Vagina (tissue), 2 donors: ENCODE measurements at regions of chr5 and their contacts with region 1.

Region 1: DNA sequence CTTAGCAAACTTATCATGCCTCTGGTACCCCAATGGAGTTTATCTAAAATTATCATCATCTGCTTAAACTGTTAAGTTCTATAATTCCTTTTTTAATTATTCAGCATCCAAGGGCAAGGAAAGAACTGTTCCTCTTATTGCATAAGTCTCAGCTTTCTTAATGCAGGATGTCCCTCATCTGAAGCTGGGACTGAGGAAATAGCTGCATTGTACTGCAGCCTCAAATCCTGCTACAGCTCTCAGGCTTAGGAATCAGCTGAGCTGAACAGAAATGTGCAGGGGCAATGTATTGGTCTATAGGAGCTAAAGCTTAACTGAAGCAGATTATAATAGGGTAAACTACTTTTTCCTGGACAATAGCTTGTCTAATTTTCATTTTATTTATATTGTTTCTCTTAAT is 48.0 kb downstream of the HAPLN1 start:
- DNase-seq: no peak
- H3K4me3 ChIP-seq: no peak overlapping the region
- H3K27ac ChIP-seq: no peak overlapping the region
- H3K4me1 ChIP-seq: no peaks in the 10 kb centered on the region
- H3K27me3 ChIP-seq: no peaks in the 10 kb centered on the region
- CTCF ChIP-seq: no peak
- POLR2A ChIP-seq: no peak

Region 2: GRCh38 chr5:84017523-84018230 is 345.0 kb after region 1 on chr5:
- intact Hi-C with region 1: loop called (anchors 10 kb)
- DNase-seq: no peak
- H3K4me3 ChIP-seq: no peak overlapping the region
- H3K27ac ChIP-seq: no peak overlapping the region
- H3K4me1 ChIP-seq: no peaks in the 10 kb centered on the region
- H3K27me3 ChIP-seq: no peaks in the 10 kb centered on the region
- CTCF ChIP-seq: no peak
- POLR2A ChIP-seq: no peak